Cardiac septum (tissue), 1 donor: ENCODE measurements at regions of chr21 and their contacts with region 1.

Region 1: GRCh38 chr21:35051287-35051818 is 2.3 kb upstream of the RUNX1 start:
- DNase-seq: peak; percentile 93

Region 2: GRCh38 chr21:34822942-34823341 is 228.4 kb before region 1 on chr21:
- intact Hi-C with region 1: no loop called
- DNase-seq: no peak

Region 3: DNA sequence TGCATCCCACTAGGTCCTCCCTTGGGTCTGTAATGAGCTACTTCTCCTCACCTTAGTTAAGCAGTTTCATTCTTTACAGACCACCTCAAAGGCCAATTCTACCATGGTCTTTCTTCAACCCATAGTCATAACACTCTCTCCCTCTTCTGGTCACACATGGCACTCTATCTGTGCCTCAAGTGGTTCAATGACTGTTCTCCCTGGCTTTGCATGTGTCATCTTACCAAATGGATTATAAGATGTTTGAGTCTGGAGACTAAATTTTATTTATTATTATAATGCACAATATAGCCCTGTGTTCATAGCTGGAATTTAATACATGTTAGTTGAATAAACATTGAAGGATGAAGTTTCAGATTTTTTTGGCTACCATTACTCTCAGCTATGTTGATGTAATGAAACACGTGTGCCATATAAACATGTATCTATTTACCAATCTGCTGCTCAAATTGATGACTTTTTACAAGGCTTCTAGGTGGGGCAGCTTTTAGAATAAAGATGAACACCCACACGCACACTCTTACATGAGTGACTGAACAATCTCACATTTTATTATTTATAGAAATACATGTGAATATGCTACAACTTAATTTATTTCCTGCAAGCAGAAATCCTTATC is 104.3 kb before region 1 on chr21:
- intact Hi-C with region 1: no loop called
- DNase-seq: no peak

Region 4: DNA sequence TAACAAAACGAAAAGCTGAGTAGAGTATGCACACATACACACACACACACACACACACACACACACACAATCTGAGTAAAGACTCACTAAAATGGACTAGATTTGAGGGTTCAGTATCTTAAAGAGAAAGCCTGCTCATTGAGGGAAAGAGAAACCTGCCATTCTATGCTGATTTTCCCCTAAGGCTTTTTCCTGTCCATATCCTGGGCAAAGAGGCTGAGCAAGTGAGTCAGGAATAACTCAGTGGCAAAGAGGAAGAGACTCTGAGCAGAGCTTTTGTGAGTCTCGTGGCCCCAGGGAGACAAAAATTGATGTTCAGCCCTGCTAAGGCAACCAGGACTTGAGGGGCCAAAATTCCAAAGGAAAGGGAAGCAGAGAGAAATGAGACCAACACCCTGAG is 35.0 kb after region 1 on chr21:
- intact Hi-C with region 1: no loop called
- DNase-seq: no peak

Region 5: DNA sequence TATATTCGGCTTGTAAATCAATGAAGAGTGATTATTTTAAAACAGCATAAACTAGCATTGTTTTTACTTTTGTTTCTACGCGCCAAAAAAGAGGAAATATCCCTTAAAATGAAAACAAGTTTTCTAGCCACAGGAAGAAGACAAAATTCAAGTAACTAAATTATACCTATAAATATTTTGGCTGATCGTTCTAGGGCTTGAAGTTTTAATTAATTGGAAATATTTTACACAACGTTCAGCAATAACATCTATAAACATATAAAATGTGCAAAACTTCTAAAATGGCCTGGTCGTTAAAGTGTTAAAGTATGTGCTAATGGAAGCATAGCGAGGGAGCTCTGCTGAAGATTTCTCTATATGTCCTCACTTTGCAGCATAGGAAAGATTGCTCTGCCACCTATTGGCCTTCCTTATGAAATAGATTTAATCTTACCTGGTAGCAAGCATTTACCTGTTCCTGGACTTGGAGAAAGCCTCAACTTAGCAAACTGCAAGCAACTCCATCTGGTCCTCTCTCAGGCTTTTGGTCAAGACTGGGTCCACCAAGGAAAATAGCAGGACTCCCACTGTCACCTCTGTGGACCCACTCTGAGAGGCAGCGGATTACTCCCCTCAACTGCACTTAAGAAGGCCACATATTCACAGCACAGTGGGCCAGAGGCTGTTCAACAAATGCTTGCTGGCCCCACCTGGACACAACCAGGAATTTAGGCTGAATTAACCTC is 349.0 kb after region 1 on chr21:
- intact Hi-C with region 1: loop called (anchors 10 kb)
- DNase-seq: no peak